ENCODE measurements at regions of chr7 and their contacts with region 1.

Region 1: DNA sequence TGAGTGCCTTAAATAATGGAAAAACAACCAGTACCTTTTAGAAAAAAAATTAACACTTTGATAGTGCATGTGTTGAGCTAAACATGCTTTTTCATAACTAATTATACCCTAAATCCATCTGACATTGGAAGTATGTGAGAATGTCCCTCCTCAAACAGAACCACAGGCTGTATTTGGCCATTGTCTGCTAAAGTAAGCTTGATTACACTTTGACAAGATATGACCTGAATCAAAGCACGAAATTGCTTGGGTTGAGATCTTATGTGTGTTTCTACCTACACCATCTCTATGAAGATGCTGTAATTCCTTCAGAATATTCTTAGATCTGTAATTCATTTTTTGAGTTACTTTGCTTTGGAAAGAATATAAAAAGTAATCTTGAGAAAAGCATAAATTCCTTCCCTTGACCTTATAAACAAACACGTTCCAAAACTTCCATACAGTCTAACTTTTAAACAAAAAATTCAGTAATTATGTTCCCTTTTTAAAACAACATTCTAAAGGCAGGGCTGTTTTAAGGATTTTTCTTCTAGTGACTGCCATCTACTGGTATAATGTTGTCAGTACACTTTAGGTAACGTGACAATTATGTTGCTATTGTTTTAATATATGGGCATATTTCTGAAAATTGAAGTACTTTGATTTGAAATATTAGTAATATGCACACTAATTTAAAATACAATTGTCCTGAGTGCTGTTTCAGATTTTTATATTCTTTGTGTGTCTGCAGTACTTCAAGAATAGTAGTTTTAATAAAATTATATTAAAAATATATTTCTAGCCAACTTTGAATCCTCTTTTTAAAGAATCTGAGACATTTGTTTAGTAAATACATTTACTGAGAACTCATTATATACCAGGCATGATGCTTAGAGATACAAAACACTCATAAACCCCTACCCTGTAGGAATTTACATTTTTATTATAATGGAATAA is 20.9 kb downstream of the CD36 start:
- DNase-seq: no peak
- H3K4me3 ChIP-seq: no peak overlapping the region
- H3K27ac ChIP-seq: no peak overlapping the region
- H3K4me1 ChIP-seq: peaks cover 0 to 10% of the 10 kb centered on the region in 2 donors
- H3K27me3 ChIP-seq: no peaks in the 10 kb centered on the region
- CTCF ChIP-seq: peak; percentile 71 to 92 (median 75)
- POLR2A ChIP-seq: no peak

Region 2: GRCh38 chr7:80362010-80362618 is 297.3 kb before region 1 on chr7:
- intact Hi-C with region 1: no loop called
- DNase-seq: no peak
- H3K4me3 ChIP-seq: no peak overlapping the region
- H3K27ac ChIP-seq: no peak overlapping the region
- H3K4me1 ChIP-seq: no peaks in the 10 kb centered on the region
- H3K27me3 ChIP-seq: no peaks in the 10 kb centered on the region
- CTCF ChIP-seq: no peak
- POLR2A ChIP-seq: no peak

Region 3: GRCh38 chr7:80428161-80429054 is 231.0 kb before region 1 on chr7:
- intact Hi-C with region 1: loop called (anchors 5 to 10 kb)
- DNase-seq: peak; percentile 21 to 65 (median 40)
- H3K4me3 ChIP-seq: no peak overlapping the region
- H3K27ac ChIP-seq: no peak overlapping the region
- H3K4me1 ChIP-seq: no peaks in the 10 kb centered on the region
- H3K27me3 ChIP-seq: no peaks in the 10 kb centered on the region
- CTCF ChIP-seq: peak; percentile 40 to 92 (median 84)
- POLR2A ChIP-seq: no peak

Measured in adrenal gland (tissue), 19 donors.